GM12878 (cell line): ENCODE measurements at regions of chrX and their contacts with region 1.

Region 1: GRCh38 chrX:19840899-19841648 is 46.3 kb downstream of the SH3KBP1 start:
- DNase-seq: peak; percentile 64
- ATAC-seq: peak; percentile 74
- H3K4me3 ChIP-seq: no peak overlapping the region
- H3K27ac ChIP-seq: peak overlapping the region; percentile 81
- H3K4me1 ChIP-seq: peaks cover 30% of the 10 kb centered on the region
- H3K27me3 ChIP-seq: no peaks in the 10 kb centered on the region
- CTCF ChIP-seq: no peak
- EP300 ChIP-seq: 0 out of 4 replicates have a peak, but pooled peaks of 1 of the 2 experiments have one; percentile 10
- POLR2A ChIP-seq: peak; percentile 66
- RAD21 ChIP-seq: no peak

Region 2: DNA sequence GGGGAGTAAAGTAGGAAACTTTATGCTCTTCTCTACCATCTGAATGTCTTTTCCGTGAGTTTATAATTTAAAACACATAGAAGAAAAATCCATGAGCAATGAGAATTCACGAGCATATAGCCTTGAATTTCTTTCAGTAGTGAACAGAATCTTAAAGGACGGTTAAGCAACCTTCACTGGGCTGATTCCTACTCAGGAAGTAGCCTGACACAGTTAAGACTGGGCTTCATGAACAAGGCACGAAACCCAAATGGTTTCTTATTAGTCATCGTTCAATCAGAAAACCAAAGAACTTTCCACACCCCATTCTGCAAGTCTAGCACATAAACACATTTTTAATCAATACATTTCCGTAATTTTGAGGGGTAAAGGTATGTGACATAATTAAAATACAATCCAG is 49.5 kb before region 1 on chrX:
- CTCF ChIA-PET with region 1: interaction called, 5 read pairs
- POLR2A ChIA-PET with region 1: interaction called, 4 read pairs
- RAD21 ChIA-PET with region 1: interaction called, 13 read pairs
- SMC1A ChIA-PET with region 1: interaction called, 14 read pairs
- in situ Hi-C with region 1: no loop called
- intact Hi-C with region 1: no loop called
- DNase-seq: no peak
- ATAC-seq: peak; percentile 76
- H3K4me3 ChIP-seq: 0 out of 2 replicates have a peak overlapping the region, but pooled peaks have one; percentile 11
- H3K27ac ChIP-seq: peak overlapping the region; percentile 69
- H3K4me1 ChIP-seq: peaks cover 17% of the 10 kb centered on the region
- H3K27me3 ChIP-seq: no peaks in the 10 kb centered on the region
- CTCF ChIP-seq: no peak
- EP300 ChIP-seq: no peak
- POLR2A ChIP-seq: no peak
- RAD21 ChIP-seq: no peak

Region 3: DNA sequence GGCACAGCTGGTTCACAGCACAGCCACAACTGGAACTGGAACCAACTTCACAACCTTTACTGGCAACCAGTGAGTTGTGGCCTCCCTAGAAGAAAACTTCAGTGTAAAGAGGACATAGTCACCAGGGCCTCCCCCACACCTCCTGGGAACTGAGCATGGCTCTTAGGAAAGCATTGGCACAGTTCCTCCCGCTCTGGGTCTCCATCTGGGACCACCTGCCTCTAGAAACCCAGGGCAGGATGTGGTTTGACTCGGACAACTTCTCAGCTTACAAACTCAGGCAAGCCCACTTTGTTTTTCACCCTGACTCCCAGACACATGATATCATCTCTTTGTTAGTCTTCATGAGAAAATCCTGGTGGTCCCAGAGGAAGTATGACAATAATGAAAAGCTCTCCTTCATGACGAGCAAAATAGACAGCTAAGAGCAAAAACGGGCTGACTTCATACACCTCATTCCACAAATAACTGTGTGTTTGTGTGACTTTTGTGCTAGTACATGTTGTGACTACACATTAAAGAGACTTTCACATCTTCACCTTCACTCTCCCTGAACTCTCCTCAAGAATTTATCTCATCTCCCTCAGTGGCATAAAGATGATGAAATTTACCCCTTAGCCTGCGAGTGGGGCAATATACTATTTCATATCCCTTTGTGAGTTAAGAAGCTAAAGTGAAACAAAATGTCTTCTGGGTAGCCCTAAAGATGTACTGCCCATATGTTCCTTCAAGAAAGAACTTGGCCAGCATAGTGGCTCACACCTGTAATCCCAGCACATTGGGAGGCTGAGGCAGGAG is 29.1 kb before region 1 on chrX:
- CTCF ChIA-PET with region 1: interaction called, 4 read pairs
- POLR2A ChIA-PET with region 1: interaction called, 15 read pairs
- RAD21 ChIA-PET with region 1: interaction called, 27 read pairs
- SMC1A ChIA-PET with region 1: interaction called, 27 read pairs
- in situ Hi-C with region 1: no loop called
- intact Hi-C with region 1: loop called (anchors 5 kb)
- DNase-seq: no peak
- ATAC-seq: peak; percentile 41
- H3K4me3 ChIP-seq: no peak overlapping the region
- H3K27ac ChIP-seq: peak overlapping the region; percentile 87
- H3K4me1 ChIP-seq: peaks cover 30% of the 10 kb centered on the region
- H3K27me3 ChIP-seq: no peaks in the 10 kb centered on the region
- CTCF ChIP-seq: no peak
- EP300 ChIP-seq: no peak
- POLR2A ChIP-seq: no peak
- RAD21 ChIP-seq: no peak

Region 4: GRCh38 chrX:19855700-19856381 is 14.8 kb after region 1 on chrX:
- CTCF ChIA-PET with region 1: interaction called, 5 read pairs
- POLR2A ChIA-PET with region 1: interaction called, 23 read pairs
- RAD21 ChIA-PET with region 1: interaction called, 35 read pairs
- SMC1A ChIA-PET with region 1: interaction called, 75 read pairs
- in situ Hi-C with region 1: no loop called
- intact Hi-C with region 1: no loop called
- DNase-seq: no peak
- ATAC-seq: peak; percentile 36
- H3K4me3 ChIP-seq: no peak overlapping the region
- H3K27ac ChIP-seq: peak overlapping the region; percentile 88
- H3K4me1 ChIP-seq: peaks cover 21% of the 10 kb centered on the region
- H3K27me3 ChIP-seq: no peaks in the 10 kb centered on the region
- CTCF ChIP-seq: no peak
- EP300 ChIP-seq: no peak
- POLR2A ChIP-seq: no peak
- RAD21 ChIP-seq: no peak

Region 5: DNA sequence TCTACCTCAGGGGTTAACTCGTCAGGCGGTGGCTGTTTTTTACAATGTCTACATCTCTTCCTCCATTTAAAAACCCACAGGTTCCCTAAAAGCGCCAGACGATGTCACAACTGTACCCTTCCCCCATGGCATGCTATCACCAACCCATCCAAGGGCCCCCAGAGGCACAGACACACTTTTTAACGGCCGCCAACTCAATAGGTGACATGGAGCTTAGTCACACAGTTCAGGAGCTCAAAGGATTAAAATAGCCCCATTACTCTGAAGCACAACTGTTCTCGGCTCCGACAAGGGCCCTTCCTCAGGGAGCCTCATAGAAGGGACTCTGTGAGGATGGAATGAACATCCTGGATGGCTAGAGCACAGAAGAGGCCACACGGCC is 34.0 kb after region 1 on chrX:
- CTCF ChIA-PET with region 1: interaction called, 4 read pairs
- POLR2A ChIA-PET with region 1: interaction called, 6 read pairs
- RAD21 ChIA-PET with region 1: interaction called, 19 read pairs
- SMC1A ChIA-PET with region 1: interaction called, 16 read pairs
- in situ Hi-C with region 1: no loop called
- intact Hi-C with region 1: loop called (anchors 5 kb)
- DNase-seq: no peak
- ATAC-seq: peak; percentile 36
- H3K4me3 ChIP-seq: peak overlapping the region; percentile 46; the same call in 1 of the 2 replicates
- H3K27ac ChIP-seq: peak overlapping the region; percentile 68
- H3K4me1 ChIP-seq: peaks cover 24% of the 10 kb centered on the region
- H3K27me3 ChIP-seq: no peaks in the 10 kb centered on the region
- CTCF ChIP-seq: no peak
- EP300 ChIP-seq: no peak
- POLR2A ChIP-seq: no peak
- RAD21 ChIP-seq: no peak

Region 6: DNA sequence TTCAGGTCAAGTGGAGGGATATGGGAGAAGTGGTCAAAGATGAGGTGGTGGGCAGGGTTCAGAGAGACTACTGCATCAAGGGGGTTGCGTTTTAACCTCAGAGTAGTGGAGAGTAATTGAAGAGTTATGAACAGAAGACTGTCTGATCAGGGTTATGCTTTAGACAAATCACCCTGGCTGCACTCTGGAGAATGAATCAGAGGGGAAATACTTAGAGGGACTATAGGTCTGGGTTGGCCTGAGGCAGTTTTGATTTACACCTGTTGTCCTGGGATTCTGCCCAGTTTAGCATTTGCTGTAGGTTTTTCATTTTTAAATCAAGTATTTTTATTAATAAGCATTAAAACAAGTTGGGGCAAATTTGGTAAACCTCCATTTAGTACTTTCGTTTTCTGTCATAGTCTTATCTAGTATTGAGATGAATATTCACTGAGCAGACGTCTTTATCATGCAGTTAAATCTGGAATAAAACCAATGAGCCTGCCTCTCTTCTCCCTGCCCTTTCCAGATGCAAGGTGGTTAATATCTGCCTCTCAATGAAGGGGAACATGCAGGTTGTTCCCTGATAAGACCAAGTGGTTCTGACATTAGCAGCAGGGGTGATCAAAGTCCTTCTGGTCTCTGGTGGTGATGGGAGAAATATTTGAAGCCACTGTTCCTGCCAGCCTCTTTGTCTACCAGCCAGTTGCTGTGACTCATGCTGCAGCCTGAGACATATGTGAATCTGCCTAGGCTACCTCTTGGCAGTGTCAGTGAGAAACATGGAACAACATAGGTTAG is 541.6 kb after region 1 on chrX:
- CTCF ChIA-PET with region 1: no interaction called
- POLR2A ChIA-PET with region 1: no interaction called
- RAD21 ChIA-PET with region 1: no interaction called
- SMC1A ChIA-PET with region 1: no interaction called
- in situ Hi-C with region 1: no loop called
- intact Hi-C with region 1: no loop called
- DNase-seq: peak; percentile 12
- ATAC-seq: peak; percentile 80
- H3K4me3 ChIP-seq: no peak overlapping the region
- H3K27ac ChIP-seq: no peak overlapping the region
- H3K4me1 ChIP-seq: peaks cover 10% of the 10 kb centered on the region
- H3K27me3 ChIP-seq: no peaks in the 10 kb centered on the region
- CTCF ChIP-seq: no peak
- EP300 ChIP-seq: no peak
- POLR2A ChIP-seq: no peak
- RAD21 ChIP-seq: no peak